Sciatic nerve (tissue), 2 donors: ENCODE measurements at regions of chr16 and their contacts with region 1.

Region 1: DNA sequence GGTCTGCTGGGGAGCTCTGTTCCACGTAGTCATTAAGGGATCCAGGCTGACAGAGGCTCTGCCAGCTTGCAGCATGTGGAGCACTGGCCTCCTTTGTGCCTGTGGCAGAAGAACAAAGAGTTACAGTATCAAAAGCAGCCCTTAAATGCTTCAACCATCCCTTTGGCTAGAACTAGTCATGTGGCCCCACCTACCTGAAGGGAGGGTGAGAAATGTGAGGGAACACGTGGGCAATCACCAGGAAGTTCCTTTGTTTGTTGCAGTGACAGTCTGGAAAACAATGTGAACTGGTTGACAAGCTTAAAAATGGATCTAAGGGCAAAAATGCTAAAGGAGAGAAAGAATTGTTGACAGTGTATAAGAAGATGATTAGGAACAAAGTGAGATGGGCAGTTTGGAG is 290.4 kb upstream of the HSBP1 start:
- DNase-seq: no peak
- ATAC-seq: no peak

Region 2: GRCh38 chr16:84294531-84295142 is 777.2 kb after region 1 on chr16 and contains the start of gene WFDC1:
- intact Hi-C with region 1: loop called (anchors 5 kb)
- DNase-seq: no peak
- ATAC-seq: peak; percentile 53
- total RNA-seq, gene WFDC1: 31.6 TPM